HCT116 (cell line): ENCODE measurements at regions of chr1 and their contacts with region 1.

Region 1: DNA sequence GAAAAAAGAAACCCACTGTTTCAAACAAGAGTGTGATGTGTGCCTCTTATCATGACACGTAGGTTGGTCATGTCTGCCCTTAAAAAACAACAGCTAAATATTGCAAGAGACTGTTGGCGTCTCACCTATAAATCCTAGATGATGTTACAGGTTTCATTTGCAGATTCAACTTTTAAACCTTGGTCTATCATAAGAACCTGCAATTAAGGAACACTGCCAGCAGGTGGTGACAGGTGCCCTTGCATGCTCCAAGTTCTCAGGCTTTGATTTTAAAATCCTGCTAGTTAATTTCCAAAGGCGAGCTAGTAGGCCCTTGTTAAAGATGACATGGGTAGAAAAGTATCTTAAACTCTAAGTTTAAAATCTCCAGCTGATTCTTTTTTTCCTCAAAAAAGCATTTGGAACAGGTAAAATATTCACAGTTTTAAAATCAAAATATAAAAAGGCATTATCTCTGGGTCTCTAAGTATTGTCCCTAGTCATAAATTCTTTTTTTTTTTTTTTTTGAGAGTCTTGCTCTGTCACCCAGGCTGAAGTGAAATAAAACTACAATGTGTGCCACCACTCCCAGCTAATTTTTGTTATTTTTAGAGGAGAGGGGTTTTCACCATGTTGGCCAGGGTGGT is 39.1 kb downstream of the CLSTN1 start:
- DNase-seq: peak; percentile 58
- ATAC-seq: peak; percentile 76
- H3K4me3 ChIP-seq: no peak overlapping the region
- H3K27ac ChIP-seq: no peak overlapping the region
- H3K4me1 ChIP-seq: peaks cover 12 to 19% of the 10 kb centered on the region in 2 experiments; a peak in 3 of 4 replicates
- H3K27me3 ChIP-seq: no peaks in the 10 kb centered on the region
- CTCF ChIP-seq: peak; percentile 80 to 88 (median 82)
- POLR2A ChIP-seq: no peak
- RAD21 ChIP-seq: peak; percentile 93

Region 2: DNA sequence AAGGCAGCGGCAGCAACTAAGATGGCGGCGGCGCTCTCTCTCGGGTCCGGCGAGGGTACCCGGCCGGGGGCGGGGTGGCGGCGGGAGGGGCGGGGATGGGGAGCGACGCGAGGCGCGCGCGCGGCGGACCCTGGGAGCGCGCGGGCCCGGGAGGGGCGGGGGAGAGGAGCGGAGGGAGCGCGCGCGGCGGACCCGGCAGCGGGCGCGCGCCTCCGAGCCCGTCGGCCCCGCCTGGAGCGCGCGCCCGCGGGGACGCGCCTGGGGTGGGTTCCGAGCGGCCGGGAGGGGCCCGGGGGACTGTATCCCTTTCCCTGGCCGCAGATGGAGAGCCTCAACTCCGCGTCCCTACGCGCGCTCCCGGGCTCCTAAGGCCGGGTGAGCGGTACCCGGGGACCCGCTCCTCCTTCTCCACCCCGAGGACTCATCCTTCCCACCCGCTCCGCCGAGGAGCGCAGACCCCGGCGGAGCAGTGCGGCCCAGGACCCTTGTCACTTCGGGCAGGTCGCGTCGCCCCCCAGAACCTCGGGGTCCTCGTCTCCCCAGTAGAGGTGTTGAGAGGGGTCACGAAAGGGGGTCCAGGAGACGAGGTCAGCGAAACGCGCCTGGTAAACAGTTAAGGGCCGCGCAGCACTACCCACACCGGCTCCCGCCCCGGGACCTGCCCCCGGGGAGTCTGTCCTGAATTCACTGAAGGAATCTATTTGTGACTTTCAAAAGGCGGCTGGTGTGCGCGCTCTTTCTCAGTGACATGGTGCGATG is 39.5 kb after region 1 on chr1 and contains the start of gene CLSTN1:
- CTCF ChIA-PET with region 1: interaction called, 4 read pairs
- POLR2A ChIA-PET with region 1: no interaction called
- RAD21 ChIA-PET with region 1: no interaction called
- intact Hi-C with region 1: loop called (anchors 5 kb)
- DNase-seq: peak; percentile 61
- ATAC-seq: peak; percentile 66
- H3K4me3 ChIP-seq: peak within 1 kb of the TSS; percentile 93 to 95
- H3K27ac ChIP-seq: peak within 1 kb of the TSS; percentile 86
- H3K4me1 ChIP-seq: peaks cover 21 to 38% of the 10 kb centered on the region in 2 experiments
- H3K27me3 ChIP-seq: no peaks in the 10 kb centered on the region
- CTCF ChIP-seq: no peak
- POLR2A ChIP-seq: no peak
- RAD21 ChIP-seq: no peak
- total RNA-seq, gene CLSTN1: 113 TPM

Region 3: DNA sequence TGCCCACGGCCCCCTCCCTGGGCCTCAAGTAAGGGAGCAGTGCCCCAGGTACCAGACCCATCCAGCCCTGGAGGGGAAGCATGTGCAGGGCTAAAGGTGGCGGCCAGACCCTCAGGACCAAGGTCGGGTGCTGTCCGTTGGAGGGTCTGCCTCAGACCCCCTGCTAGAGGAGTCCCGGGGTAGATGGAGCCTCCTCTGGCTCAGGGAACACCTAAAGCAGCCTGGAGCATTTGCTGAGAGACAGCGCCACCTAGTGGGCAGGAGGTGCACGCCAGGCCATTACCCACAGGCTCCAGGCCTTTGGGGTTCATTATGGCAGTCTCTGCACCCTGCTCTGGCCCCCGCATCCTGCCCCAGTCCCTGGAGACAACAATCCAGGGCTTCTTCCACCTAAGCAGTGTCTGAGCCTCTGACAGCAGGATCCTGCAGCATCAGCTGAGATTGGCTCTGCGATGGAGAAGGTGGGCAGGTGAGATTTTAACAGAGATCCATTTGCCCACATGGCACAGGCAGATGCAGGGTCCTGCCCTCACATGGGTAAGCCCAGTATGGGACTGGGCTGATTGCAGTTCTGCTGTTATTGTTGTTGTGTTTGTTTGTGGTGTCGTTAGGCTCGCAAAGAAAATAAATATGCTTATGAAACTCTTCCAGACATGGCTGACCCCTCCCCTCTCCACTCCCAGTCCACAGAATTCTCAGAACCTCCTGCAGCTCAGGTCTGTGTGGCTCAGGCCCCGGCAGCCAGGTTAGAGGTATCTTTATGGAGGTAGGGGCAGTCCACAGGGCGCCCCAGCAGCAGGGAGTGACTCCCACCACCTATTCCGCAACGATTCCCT is 83.0 kb after region 1 on chr1:
- CTCF ChIA-PET with region 1: interaction called, 21 read pairs
- POLR2A ChIA-PET with region 1: no interaction called
- RAD21 ChIA-PET with region 1: interaction called in 1 of 2 experiments, 3 read pairs
- intact Hi-C with region 1: loop called (anchors 1 kb)
- DNase-seq: no peak
- ATAC-seq: peak; percentile 97
- H3K4me3 ChIP-seq: no peak overlapping the region
- H3K27ac ChIP-seq: no peak overlapping the region
- H3K4me1 ChIP-seq: peaks cover 0 to under 1% of the 10 kb centered on the region in 2 experiments; a peak in 1 of 4 replicates
- H3K27me3 ChIP-seq: no peaks in the 10 kb centered on the region
- CTCF ChIP-seq: peak; percentile 97 to 98 (median 97)
- POLR2A ChIP-seq: no peak
- RAD21 ChIP-seq: peak; percentile 99

Region 4: DNA sequence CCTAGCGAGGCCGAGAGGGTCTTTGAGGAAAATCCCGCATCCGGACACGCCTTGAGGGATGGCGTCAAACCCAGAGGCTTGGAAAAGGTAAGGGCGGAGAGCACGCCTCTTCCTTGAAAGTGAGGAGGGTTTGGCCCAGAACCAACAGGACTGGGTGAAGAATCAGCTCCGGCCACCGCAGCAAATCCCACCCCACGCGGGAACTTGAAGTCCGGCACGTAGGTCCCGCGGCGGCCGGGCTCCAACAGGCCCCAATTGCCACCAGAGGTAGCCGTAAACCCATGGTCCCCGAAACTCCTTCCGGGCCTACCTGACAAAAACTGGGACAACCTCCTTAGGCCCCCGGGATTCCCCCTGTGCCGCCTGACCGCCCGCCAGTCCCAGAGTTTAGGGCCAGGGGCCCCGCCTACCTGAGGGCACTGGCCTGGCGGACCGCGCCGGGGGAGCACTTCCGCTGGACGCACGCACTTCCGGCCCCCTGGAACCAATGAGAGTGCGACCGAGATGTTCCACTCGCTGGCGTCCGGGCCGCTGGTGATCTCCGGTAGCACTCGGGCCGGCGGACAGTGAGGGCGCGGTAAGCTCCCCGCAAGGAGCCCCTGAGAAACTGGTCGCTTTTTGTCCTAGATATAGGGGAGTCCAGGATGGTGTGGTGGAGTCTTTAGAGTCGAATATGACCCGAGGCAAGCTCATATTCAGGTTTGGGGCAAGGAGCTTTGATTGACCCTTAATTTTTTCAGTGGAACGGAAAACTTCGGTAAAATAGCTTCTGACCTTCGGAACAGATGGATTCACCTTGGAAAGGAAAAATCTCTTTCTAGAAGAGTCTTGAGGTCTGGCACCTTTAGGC is 158.5 kb after region 1 on chr1 and contains the starts of genes LZIC and NMNAT1:
- CTCF ChIA-PET with region 1: no interaction called
- POLR2A ChIA-PET with region 1: no interaction called
- RAD21 ChIA-PET with region 1: no interaction called
- intact Hi-C with region 1: loop called (anchors 2 kb)
- DNase-seq: peak; percentile 88
- ATAC-seq: peak; percentile 93
- H3K4me3 ChIP-seq: peak within 1 kb of the TSS; percentile 84 to 90
- H3K27ac ChIP-seq: peak within 1 kb of the TSS; percentile 83
- H3K4me1 ChIP-seq: peaks cover 4 to 6% of the 10 kb centered on the region in 2 experiments; a peak in 2 of 4 replicates
- H3K27me3 ChIP-seq: no peaks in the 10 kb centered on the region
- CTCF ChIP-seq: no peak
- POLR2A ChIP-seq: peak; percentile 88
- RAD21 ChIP-seq: no peak; the same call in 1 of the 2 replicates
- total RNA-seq, gene LZIC: 26.6 TPM
- total RNA-seq, gene NMNAT1: 8.6 TPM

Region 5: DNA sequence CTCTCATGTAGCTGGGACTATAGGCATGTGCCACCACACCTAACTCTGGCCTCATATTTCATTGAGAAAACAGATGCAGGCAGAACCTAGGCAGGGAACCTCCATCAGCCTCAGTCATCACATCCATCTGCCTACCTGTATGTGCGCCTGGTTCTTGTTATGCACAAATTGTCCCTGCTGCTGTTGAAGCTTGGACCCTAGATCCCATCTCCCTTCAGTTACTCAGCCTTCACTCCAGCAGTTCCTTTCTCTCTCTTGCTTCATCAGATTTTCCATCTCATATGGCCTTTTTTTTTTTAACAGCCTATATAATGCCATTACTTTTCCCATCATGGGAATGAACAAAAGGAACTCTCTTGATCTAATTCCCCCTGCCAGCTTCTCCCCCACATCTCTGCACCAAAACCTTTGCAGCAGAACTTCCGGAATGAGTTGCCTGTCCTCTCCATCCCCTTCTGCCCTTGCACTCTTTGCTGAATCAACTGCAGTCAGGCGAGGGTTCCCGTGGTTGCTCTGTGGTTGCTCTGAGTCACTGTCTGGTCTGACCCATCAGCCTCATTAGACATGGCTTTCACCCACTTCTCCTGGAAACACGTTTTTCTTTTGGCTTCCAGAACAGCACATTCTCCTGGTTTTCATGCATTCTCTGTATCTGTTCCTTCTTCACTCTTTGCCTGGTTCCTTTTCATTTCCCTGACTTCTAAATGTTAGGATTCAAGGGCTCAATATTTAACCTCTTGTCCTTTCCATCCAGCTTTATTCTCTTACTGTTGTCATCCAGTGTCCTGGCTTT is 289.6 kb after region 1 on chr1:
- CTCF ChIA-PET with region 1: no interaction called
- POLR2A ChIA-PET with region 1: no interaction called
- RAD21 ChIA-PET with region 1: no interaction called
- intact Hi-C with region 1: no loop called
- DNase-seq: no peak
- ATAC-seq: peak; percentile 86
- H3K4me3 ChIP-seq: no peak overlapping the region
- H3K27ac ChIP-seq: no peak overlapping the region
- H3K4me1 ChIP-seq: peaks cover 3 to 19% of the 10 kb centered on the region in 2 experiments
- H3K27me3 ChIP-seq: no peaks in the 10 kb centered on the region
- CTCF ChIP-seq: no peak
- POLR2A ChIP-seq: no peak
- RAD21 ChIP-seq: no peak